ENCODE measurements at regions of chr11 and their contacts with region 1.

Region 1: GRCh38 chr11:99519095-99519494 is 498.3 kb downstream of the CNTN5 start:
- DNase-seq: no peak
- ATAC-seq: no peak
- H3K4me3 ChIP-seq: no peak overlapping the region
- H3K27ac ChIP-seq: no peak overlapping the region
- H3K4me1 ChIP-seq: peaks cover 19% of the 10 kb centered on the region
- H3K27me3 ChIP-seq: no peaks in the 10 kb centered on the region
- CTCF ChIP-seq: no peak

Region 2: DNA sequence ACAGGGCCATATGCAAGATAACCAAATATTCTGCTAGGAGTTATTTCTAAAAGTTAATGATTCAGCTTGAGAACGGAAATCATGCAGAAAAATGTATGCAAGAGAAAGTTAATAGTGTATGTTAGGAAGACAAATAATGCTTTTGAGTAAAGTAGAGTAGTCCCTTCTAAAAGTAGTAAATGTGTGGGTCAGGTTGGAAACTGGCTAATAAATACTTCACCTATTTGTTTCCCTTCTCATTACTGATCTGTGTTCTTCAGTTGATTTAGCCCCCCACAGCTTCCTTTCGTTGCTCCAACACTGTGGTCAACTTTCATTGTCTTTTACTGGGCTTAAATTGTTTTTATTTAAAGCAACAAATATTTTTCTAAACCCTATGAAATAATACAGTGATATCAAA is 54.1 kb before region 1 on chr11:
- CTCF ChIA-PET with region 1: no interaction called
- POLR2A ChIA-PET with region 1: no interaction called
- intact Hi-C with region 1: loop called (anchors 5 kb)
- DNase-seq: no peak
- ATAC-seq: no peak
- H3K4me3 ChIP-seq: no peak overlapping the region
- H3K27ac ChIP-seq: no peak overlapping the region
- H3K4me1 ChIP-seq: no peaks in the 10 kb centered on the region
- H3K27me3 ChIP-seq: no peaks in the 10 kb centered on the region
- CTCF ChIP-seq: no peak

Measured in PC-3 (cell line).